Dorsolateral prefrontal cortex (tissue), 120 donors: ENCODE measurements at regions of chr6 and their contacts with region 1.

Region 1: DNA sequence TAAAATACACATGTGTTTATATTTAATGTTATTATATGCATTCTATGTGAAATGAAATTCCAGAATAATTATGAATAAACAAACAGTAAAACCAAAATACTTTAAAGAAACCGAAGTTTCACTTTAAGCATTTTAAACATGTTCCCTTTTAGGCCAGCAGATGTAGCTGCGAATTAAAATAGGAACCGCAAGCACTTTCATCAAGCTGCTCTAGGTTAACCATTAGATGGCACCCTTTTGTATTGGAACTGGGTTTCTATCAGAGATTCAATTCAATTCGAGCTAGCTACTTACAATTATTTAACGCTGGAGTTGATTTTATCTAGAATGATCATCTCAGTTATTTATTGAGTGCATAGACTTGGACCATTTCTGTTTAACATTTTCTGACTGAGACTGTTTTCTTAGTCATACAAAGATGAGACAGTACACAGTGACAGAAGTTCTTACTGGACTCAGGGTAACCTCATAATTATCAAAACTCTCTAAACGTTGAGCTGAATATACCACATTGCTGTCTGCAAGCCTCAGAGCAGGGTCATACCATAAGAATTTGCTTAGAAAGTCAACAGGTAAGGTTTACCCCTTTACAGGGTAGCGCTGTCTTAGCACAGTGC is 8.5 kb downstream of the TMEM242 start:
- DNase-seq: peak in 2 of 10 donors; percentile 24 to 31
- H3K4me3 ChIP-seq: peak overlapping the region in 3 of 59 donors; percentile 2 to 8 (median 6)
- H3K27ac ChIP-seq: peak overlapping the region in 37 of 59 donors; percentile 1 to 76 (median 29)
- H3K27me3 ChIP-seq: no peaks in the 10 kb centered on the region
- CTCF ChIP-seq: peak; percentile 72 to 99 (median 94)

Region 2: DNA sequence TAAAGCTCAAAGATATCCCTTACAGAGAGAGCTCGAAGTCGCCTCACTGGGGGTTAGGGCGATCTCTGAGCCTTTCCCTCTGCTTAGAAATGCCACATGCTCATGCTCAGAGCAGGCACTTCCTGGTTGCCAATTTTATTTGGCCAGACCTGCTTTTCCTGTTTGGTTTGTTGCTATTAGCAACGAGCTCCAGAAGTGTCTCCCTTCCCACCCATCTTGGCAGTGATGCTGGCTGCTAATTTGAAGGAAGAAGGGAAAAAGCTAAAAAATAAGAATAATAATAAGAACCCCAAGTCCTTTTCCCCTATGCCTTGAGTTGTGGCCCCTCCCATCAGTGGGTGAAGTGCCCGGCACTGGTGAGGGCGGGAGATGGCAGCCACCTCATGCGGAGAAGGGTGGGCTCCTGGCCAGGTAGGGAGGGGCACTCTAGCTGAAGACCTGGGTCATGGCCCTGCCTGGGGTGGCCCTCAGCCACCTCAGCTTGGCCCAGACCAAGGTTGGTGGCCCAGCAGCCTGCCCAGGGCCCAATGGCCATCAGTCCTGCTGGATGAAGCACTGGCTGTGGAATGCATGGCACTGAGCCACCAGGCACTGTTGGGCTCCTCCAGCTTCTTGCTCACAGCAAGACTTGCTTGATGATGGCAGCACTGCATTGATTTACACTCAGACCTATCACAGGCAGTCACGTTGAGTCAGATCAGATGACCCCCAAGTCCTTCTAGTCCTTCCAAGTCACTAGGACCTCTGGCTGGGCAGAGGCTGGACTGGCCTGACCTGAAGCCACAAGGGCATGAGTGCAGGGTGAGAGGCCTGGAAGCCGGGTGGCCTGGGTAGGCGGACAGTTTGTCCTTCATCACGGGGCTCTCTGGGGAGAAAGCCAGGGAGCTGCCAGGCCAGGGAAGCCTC is 745.9 kb after region 1 on chr6:
- intact Hi-C with region 1: loop called in 1 of 2 experiments (anchors 10 kb)
- DNase-seq: peak in 6 of 10 donors; percentile 45 to 78 (median 72)
- H3K4me3 ChIP-seq: peak overlapping the region in 11 of 59 donors; percentile 3 to 30 (median 10)
- H3K27ac ChIP-seq: peak overlapping the region in 58 of 59 donors; percentile 33 to 94 (median 83)
- H3K27me3 ChIP-seq: no peaks in the 10 kb centered on the region
- CTCF ChIP-seq: no peak